IMR-90 (cell line): ENCODE measurements at regions of chr1 and their contacts with region 1.

Region 1: DNA sequence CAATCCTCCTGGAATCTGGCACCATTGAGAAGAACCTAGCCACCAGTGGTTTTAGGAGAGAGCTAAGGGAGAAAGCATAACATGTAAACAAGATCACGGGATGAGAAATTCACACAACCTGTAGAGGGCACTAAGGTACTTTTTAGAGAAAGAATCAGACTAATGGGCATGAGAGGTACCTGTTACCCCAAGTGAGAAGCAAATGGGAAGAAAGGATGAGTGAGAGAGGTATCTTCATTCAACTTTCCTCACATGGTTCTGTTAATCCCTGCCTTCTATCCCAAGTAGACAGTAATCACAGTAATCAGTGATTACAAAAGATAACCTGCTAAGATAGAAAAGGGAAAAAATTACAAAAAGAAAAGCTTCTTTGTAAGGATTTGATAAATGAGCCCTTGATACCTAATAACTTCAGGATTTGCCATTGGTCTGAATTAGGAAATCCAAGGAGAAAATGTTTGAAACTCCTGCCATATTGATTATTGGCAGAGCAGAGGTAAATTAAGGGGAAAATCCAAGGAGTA is 251.1 kb upstream of the ADGRL2 start:
- DNase-seq: peak; percentile 52
- ATAC-seq: peak; percentile 82
- H3K4me3 ChIP-seq: no peak overlapping the region
- H3K27ac ChIP-seq: no peak overlapping the region
- H3K4me1 ChIP-seq: no peaks in the 10 kb centered on the region
- H3K27me3 ChIP-seq: no peaks in the 10 kb centered on the region
- CTCF ChIP-seq: peak; percentile 65
- POLR2A ChIP-seq: no peak
- RAD21 ChIP-seq: peak; percentile 77

Region 2: GRCh38 chr1:81617308-81617967 is 67.8 kb after region 1 on chr1:
- CTCF ChIA-PET with region 1: no interaction called
- POLR2A ChIA-PET with region 1: no interaction called
- dilution Hi-C with region 1: no loop called
- in situ Hi-C with region 1: no loop called
- intact Hi-C with region 1: no loop called
- DNase-seq: peak; percentile 4
- ATAC-seq: no peak
- H3K4me3 ChIP-seq: no peak overlapping the region
- H3K27ac ChIP-seq: no peak overlapping the region
- H3K4me1 ChIP-seq: no peaks in the 10 kb centered on the region
- H3K27me3 ChIP-seq: no peaks in the 10 kb centered on the region
- CTCF ChIP-seq: no peak
- POLR2A ChIP-seq: no peak
- RAD21 ChIP-seq: no peak

Region 3: GRCh38 chr1:81781749-81782148 is 232.1 kb after region 1 on chr1:
- CTCF ChIA-PET with region 1: no interaction called
- POLR2A ChIA-PET with region 1: interaction called, 12 read pairs
- dilution Hi-C with region 1: no loop called
- in situ Hi-C with region 1: no loop called
- intact Hi-C with region 1: no loop called
- DNase-seq: no peak
- ATAC-seq: no peak
- H3K4me3 ChIP-seq: no peak overlapping the region
- H3K27ac ChIP-seq: no peak overlapping the region
- H3K4me1 ChIP-seq: no peaks in the 10 kb centered on the region
- H3K27me3 ChIP-seq: no peaks in the 10 kb centered on the region; the same call in 1 of the 2 replicates
- CTCF ChIP-seq: no peak
- POLR2A ChIP-seq: no peak
- RAD21 ChIP-seq: no peak

Region 4: GRCh38 chr1:81950591-81951244 is 401.1 kb after region 1 on chr1:
- CTCF ChIA-PET with region 1: no interaction called
- POLR2A ChIA-PET with region 1: no interaction called
- dilution Hi-C with region 1: no loop called
- in situ Hi-C with region 1: no loop called
- intact Hi-C with region 1: loop called (anchors 1 kb)
- DNase-seq: peak; percentile 21
- ATAC-seq: peak; percentile 37; the same call in 1 of the 2 replicates
- H3K4me3 ChIP-seq: no peak overlapping the region
- H3K27ac ChIP-seq: no peak overlapping the region
- H3K4me1 ChIP-seq: no peaks in the 10 kb centered on the region; the same call in 1 of the 2 replicates
- H3K27me3 ChIP-seq: no peaks in the 10 kb centered on the region
- CTCF ChIP-seq: no peak
- POLR2A ChIP-seq: no peak
- RAD21 ChIP-seq: no peak